Sigmoid colon (tissue), 7 donors: ENCODE measurements at regions of chr2 and their contacts with region 1.

Region 1: DNA sequence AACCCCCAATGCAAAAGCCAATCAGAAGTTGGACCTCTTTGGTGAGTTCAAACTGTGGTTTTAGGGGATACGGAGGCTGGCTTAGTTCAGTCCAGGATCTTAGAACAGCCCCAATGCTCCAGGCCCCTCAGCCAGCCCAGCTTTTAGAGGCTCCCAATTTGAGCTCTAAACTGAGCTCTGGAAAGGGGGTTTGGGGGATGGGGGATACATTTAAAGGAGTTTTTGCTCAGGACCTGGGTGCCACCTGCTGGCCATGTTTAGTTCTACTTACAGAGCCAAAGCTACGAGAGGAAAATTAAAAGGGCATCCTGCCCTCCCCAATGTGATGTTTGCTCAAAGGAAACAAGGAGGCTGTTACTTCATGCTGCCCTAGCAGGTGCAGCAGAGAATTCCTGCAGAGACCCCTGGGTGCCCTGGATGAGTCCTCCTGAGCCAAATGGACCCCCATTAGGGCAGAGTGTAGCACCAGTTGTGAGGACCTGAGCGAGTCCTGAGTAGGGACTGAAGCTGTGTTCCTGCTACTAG is 15.9 kb upstream of the TMEM214 start:
- DNase-seq: no peak
- H3K4me3 ChIP-seq: no peak overlapping the region
- H3K27ac ChIP-seq: no peak overlapping the region
- H3K4me1 ChIP-seq: peaks cover 0 to 17% (median 14%) of the 10 kb centered on the region in 4 donors
- H3K27me3 ChIP-seq: no peaks in the 10 kb centered on the region
- CTCF ChIP-seq: peak; percentile 23 to 70 (median 66)
- EP300 ChIP-seq: no peak
- POLR2A ChIP-seq: no peak

Region 2: DNA sequence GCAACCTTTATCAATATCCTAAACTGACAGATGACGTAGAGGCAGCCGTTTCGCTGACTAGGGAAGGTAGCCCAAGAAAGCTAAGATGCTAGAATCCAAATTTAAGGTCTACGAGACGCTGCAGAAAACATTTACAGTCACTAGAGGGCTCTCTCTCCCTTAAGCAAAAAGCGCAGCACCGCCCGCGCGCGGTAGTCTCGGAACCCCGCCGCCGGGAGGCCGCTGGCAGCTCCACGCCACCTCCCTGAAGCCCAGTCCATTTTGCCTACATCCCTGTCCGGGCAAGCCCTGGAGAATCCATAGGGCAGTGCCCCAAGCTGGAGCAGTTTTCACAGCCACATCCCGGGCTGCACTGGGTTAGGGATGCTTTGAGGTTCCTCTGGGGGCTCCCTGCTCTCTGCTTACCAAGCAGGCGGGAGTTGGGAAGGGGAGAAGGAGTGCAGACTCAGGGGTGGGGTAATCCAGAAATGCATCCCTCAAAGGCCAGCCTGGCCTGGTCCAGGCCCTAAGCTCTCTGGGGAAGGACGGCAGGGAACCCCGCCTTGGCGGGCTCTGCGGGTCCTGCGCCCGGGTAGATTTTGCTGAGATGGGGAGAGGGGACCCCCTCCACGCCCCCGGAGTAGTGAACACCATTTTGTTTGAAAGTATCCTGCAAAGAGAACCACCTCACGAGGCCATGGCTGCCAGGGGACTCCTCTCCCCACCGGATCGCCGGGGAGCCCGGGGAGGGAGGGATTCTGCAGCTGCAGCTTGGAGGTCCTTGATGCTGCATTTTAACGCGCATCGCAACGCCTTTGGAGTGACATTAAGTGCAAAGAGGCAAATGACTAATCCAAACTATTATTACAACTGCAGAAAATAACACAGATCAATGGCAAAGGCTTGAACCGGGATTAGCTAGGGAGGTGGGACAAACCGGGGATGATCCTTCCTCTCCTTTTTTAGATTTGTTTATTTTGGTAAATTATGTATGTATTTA is 170.2 kb before region 1 on chr2:
- intact Hi-C with region 1: loop called (anchors 5 kb)
- DNase-seq: peak; percentile 82
- H3K4me3 ChIP-seq: no peak overlapping the region
- H3K27ac ChIP-seq: no peak overlapping the region
- H3K4me1 ChIP-seq: peaks cover 0 to 39% (median 37%) of the 10 kb centered on the region in 4 donors
- H3K27me3 ChIP-seq: peaks cover 35 to 98% (median 84%) of the 10 kb centered on the region in 3 donors
- CTCF ChIP-seq: peak; percentile 31 to 72 (median 63)
- EP300 ChIP-seq: no peak
- POLR2A ChIP-seq: no peak

Region 3: GRCh38 chr2:26959331-26959730 is 57.5 kb before region 1 on chr2:
- intact Hi-C with region 1: loop called (anchors 1 kb)
- DNase-seq: no peak
- H3K4me3 ChIP-seq: no peak overlapping the region
- H3K27ac ChIP-seq: no peak overlapping the region
- H3K4me1 ChIP-seq: no peaks in the 10 kb centered on the region
- H3K27me3 ChIP-seq: peaks cover 0 to 51% (median 10%) of the 10 kb centered on the region in 3 donors
- CTCF ChIP-seq: no peak
- EP300 ChIP-seq: no peak
- POLR2A ChIP-seq: no peak

Region 4: DNA sequence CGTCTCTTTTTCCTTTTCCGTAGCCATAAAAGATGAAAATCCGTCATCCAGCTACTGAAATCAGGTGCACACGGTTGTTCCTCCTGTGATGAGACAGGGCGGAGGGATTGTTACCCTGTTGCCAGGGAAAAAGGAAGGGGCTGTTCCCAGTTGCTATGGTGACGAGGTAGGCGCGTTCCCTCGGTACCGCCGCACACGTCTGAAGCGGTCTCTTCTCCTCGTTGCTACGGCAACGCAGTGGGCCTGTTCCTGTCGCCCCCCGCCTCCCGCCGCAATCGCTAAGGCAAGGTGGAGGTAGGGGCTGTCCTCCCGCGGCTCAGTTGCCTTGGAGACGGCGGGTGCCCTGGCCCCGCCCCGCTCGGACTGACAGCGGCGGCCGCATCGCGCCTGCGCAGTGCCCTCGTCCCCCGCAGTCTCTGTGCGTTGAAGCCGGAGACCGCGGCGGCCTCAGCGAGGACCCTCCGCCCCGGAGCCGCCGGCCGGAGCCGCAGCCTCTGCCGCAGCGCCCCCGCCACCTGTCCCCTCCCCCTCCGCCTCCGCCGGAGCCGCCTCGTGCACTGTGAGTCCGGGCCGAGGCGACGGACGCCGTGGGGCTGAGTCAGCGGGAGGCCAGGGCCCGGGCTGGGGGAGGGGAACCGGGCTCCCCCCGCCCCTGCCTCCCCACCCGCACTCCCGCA is 46.5 kb before region 1 on chr2 and contains the start of gene MAPRE3:
- intact Hi-C with region 1: loop called (anchors 2 kb)
- DNase-seq: peak; percentile 88
- H3K4me3 ChIP-seq: peak within 1 kb of the TSS; percentile 62 to 95 (median 82)
- H3K27ac ChIP-seq: peak within 1 kb of the TSS; percentile 76 to 88 (median 86)
- H3K4me1 ChIP-seq: peaks cover 0 to 24% (median 17%) of the 10 kb centered on the region in 4 donors
- H3K27me3 ChIP-seq: no peaks in the 10 kb centered on the region
- CTCF ChIP-seq: no peak
- EP300 ChIP-seq: no peak
- POLR2A ChIP-seq: no peak
- total RNA-seq, gene MAPRE3: 5.1 to 27.4 (median 8.9) TPM

Region 5: DNA sequence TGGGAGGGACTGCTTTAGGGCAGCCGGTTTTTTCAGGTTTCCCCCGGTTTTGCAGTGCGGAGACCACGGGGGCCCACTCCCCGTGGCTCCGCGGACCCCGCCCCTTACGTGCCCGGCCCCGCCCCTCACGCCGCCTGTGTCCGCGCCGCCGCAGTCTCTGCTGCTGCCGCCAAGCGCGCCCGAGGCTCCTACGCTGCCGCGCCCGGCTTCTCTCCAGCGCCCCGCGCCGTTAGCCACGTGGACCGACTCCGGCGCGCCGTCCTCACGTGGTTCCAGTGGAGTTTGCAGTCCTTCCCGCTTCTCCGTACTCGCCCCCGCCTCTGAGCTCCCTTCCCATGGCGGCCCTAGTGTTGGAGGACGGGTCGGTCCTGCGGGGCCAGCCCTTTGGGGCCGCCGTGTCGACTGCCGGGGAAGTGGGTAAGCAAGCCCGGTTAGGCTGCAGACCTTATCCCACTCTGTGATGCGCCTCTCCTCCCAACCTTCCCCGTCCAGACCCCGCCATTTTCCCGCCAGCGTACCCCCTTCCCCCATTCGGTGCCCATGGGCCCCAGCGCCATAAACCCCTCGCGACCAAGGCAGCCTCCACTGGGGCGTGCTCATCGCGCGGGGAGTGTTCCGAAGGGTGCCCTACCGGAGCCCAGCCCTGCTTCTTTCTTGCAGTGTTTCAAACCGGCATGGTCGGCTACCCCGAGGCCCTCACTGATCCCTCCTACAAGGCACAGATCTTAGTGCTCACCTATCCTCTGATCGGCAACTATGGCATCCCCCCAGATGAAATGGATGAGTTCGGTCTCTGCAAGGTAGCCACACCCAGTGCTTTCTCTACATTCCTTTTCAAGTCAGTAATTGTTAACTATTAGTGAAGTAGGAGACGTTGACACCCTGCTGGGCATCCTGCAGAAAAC is 200.6 kb after region 1 on chr2 and contains the start of gene CAD:
- intact Hi-C with region 1: no loop called
- DNase-seq: peak; percentile 93
- H3K4me3 ChIP-seq: peak within 1 kb of the TSS; percentile 47 to 71 (median 66)
- H3K27ac ChIP-seq: peak within 1 kb of the TSS; percentile 74 to 79 (median 77)
- H3K4me1 ChIP-seq: peaks cover 0 to 36% (median 26%) of the 10 kb centered on the region in 4 donors
- H3K27me3 ChIP-seq: no peaks in the 10 kb centered on the region
- CTCF ChIP-seq: peak in 3 of 4 experiments; percentile 9 to 30 (median 25)
- EP300 ChIP-seq: no peak
- POLR2A ChIP-seq: no peak
- total RNA-seq, gene CAD: 9.1 to 25.2 (median 17.1) TPM